GM10248 (cell line): ENCODE measurements at regions of chr2 and their contacts with region 1.

Region 1: GRCh38 chr2:177164584-177165052 is 48.0 kb upstream of the HNRNPA3 start:
- DNase-seq: peak; percentile 63
- CTCF ChIP-seq: peak; percentile 99

Region 2: GRCh38 chr2:177124371-177124770 is 40.2 kb before region 1 on chr2:
- CTCF ChIA-PET with region 1: no interaction called
- POLR2A ChIA-PET with region 1: no interaction called
- DNase-seq: no peak
- CTCF ChIP-seq: no peak

Region 3: GRCh38 chr2:177148477-177149154 is 16.0 kb before region 1 on chr2:
- CTCF ChIA-PET with region 1: interaction called, 47 read pairs
- POLR2A ChIA-PET with region 1: no interaction called
- DNase-seq: peak; percentile 57
- CTCF ChIP-seq: peak; percentile 93

Region 4: GRCh38 chr2:177281400-177282180 is 117.0 kb after region 1 on chr2:
- CTCF ChIA-PET with region 1: interaction called, 13 read pairs
- POLR2A ChIA-PET with region 1: interaction called, 3 read pairs
- DNase-seq: peak; percentile 21
- CTCF ChIP-seq: no peak

Region 5: DNA sequence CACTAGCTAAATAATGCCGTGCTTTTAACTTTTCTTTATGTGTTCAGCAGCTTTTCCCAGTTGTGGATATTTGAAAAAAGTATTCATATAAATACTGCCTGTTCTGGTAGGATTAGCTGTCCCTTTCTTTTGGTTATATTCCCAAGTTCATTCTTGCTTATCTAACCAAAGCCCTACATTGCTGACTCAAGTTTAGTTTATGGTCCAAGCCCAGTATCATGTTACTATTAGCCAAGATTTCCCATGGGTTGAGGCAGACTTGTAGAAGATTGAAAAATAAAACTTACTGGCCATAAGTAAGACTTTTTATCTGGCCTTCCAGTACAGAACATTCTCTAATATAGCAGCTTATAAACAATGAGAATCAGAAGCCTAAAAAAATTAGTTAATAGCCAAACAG is 149.6 kb after region 1 on chr2:
- CTCF ChIA-PET with region 1: interaction called, 15 read pairs
- POLR2A ChIA-PET with region 1: no interaction called
- DNase-seq: no peak
- CTCF ChIP-seq: no peak

Region 6: GRCh38 chr2:177392373-177393202 is 228.0 kb after region 1 on chr2 and contains the start of gene AGPS:
- CTCF ChIA-PET with region 1: interaction called, 22 read pairs
- POLR2A ChIA-PET with region 1: no interaction called
- DNase-seq: peak; percentile 89
- CTCF ChIP-seq: no peak

Region 7: DNA sequence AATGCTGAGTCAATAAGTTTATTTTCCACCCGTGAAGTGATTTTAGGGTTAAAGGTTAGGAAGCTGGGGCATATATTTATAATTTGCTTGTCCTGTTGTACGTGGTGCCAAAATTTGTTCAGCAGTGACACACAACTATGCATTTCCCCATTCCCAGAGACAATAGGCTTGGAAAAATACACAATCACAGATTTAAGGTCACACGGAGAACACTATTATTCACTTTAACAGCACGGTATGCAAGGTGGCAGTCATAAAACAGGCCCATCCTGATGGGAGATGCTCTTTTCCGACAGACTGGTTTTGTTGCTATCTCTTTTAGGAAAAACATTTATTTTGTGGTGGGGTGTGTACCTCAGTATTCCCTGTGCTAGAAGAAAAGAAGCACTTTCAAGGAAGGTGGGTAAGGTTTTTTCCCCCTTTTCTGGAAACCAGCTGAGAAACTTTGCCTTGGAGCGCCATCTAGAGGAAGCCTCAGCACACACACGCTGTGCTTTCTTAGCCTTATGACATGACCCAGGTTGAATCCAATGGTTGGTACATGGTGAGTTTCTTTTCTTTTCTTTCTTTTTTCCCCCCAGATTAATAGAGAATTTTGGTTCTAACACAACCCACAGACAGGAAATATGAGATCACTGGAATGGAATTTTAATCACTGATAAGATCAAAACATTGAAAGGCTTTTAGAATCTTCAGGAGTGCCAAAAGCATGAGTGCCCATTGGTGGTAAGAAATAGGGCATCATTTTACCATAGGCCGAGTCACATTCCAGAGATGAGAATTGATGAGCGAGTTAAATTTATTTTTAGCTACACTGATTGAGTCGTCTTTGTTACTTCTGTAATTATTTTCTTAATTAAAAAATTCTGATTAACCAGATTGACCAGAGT is 560.0 kb after region 1 on chr2:
- CTCF ChIA-PET with region 1: interaction called, 25 read pairs
- POLR2A ChIA-PET with region 1: no interaction called
- DNase-seq: peak; percentile 50
- CTCF ChIP-seq: peak; percentile 93